ENCODE measurements at regions of chr11 and their contacts with region 1.

Region 1: GRCh38 chr11:12900496-12900895 is 108.6 kb upstream of the RASSF10 start:
- DNase-seq: no peak
- ATAC-seq: no peak
- H3K4me3 ChIP-seq: no peak overlapping the region
- H3K27ac ChIP-seq: peak overlapping the region; percentile 88 to 93 (median 92)
- H3K4me1 ChIP-seq: peaks cover 42 to 61% of the 10 kb centered on the region in 2 donors
- H3K27me3 ChIP-seq: no peaks in the 10 kb centered on the region
- CTCF ChIP-seq: no peak
- POLR2A ChIP-seq: no peak

Region 2: DNA sequence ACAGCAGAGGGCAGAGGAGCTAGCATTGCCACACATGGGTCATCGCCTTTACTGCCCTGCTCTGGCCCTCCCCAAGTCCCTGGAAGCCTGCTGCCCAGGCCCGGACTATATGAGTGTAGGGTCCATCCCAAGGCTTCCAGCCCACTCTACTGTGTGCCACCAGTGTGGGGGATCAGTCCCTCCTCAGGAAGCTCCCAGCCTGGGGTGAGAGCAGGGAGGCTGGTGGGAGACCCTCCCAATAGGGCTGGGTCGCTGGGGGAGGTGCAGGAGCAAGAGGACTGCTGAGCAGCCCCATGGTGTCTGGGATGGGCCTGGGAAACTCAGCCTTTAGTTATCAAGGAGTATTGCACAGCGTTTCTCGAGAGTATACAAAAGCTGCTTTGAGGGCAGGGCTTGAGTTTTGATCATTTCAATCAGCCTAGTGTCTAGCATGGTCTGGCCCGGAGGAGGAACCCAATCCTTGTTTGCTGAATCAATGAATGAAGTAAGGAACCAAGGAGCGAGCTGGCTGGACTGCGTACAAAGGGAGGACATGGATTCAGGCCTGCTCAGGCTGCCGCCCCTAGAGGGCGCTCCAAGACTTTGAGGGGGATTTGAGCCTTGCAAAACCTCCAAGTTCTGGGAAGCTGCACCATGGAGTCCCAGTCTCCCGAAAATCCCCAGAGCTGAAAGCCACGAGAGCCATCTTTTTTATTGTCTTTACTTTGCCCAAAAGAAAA is 612.1 kb before region 1 on chr11:
- in situ Hi-C with region 1: no loop called
- intact Hi-C with region 1: loop called (anchors 5 kb)
- DNase-seq: peak in 1 of 2 donors; percentile 55
- ATAC-seq: peak; percentile 47 to 48
- H3K4me3 ChIP-seq: no peak overlapping the region
- H3K27ac ChIP-seq: peak overlapping the region in 2 of 4 donors; percentile 53 to 58
- H3K4me1 ChIP-seq: peaks cover 7 to 11% of the 10 kb centered on the region in 2 donors
- H3K27me3 ChIP-seq: no peaks in the 10 kb centered on the region
- CTCF ChIP-seq: peak; percentile 31 to 80 (median 66)
- POLR2A ChIP-seq: no peak

Region 3: DNA sequence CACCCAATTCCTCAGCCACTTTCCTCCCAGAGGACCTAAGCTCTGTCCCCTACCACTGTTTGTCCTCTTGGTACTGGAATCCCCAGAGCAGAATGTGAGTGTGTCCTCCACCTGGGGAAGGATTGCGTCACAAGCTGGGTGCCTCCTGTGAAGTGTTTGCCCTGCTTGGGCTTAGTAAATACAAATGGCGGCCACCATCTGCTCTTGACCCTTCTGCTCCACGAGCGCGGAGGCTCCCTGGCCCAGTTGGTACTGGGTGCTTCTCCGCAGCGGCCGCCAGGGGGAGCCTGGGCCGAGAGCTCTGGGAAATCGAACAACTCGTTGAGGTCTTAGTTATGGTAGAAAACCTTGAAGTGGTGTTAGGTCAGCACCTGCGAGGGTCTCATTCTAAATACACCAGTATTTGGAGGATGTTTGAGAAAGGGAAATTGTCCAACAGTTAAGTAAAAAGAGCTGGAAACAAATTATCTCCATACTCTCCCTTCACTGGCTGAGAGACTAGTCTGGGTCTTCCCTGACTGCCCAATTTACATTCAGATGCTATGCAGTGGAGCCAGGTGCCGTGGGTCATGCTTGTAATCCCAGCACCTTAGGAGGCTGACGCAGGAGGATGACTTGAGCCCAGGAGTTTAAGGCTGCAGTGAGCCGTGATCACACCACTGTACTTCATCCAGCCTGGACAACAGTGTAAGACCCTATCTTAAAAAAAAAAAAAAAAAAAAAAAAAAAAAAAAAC is 300.9 kb before region 1 on chr11:
- in situ Hi-C with region 1: loop called in 2 of 4 experiments (anchors 5 to 10 kb)
- intact Hi-C with region 1: loop called (anchors 2 kb)
- DNase-seq: peak in 1 of 2 donors; percentile 36
- ATAC-seq: peak; percentile 65 to 86
- H3K4me3 ChIP-seq: no peak overlapping the region
- H3K27ac ChIP-seq: no peak overlapping the region
- H3K4me1 ChIP-seq: peaks cover 0 to 6% of the 10 kb centered on the region in 2 donors
- H3K27me3 ChIP-seq: no peaks in the 10 kb centered on the region
- CTCF ChIP-seq: peak; percentile 48 to 82 (median 66)
- POLR2A ChIP-seq: no peak

Region 4: GRCh38 chr11:12777208-12777874 is 123.2 kb before region 1 on chr11:
- in situ Hi-C with region 1: no loop called
- intact Hi-C with region 1: loop called (anchors 5 kb)
- DNase-seq: no peak
- ATAC-seq: peak; percentile 93 to 94
- H3K4me3 ChIP-seq: peak overlapping the region in 1 of 4 donors; percentile 17
- H3K27ac ChIP-seq: peak overlapping the region; percentile 80 to 95 (median 90)
- H3K4me1 ChIP-seq: peaks cover 53 to 97% of the 10 kb centered on the region in 2 donors
- H3K27me3 ChIP-seq: no peaks in the 10 kb centered on the region
- CTCF ChIP-seq: no peak
- POLR2A ChIP-seq: peak in 1 of 2 donors; percentile 42

Region 5: DNA sequence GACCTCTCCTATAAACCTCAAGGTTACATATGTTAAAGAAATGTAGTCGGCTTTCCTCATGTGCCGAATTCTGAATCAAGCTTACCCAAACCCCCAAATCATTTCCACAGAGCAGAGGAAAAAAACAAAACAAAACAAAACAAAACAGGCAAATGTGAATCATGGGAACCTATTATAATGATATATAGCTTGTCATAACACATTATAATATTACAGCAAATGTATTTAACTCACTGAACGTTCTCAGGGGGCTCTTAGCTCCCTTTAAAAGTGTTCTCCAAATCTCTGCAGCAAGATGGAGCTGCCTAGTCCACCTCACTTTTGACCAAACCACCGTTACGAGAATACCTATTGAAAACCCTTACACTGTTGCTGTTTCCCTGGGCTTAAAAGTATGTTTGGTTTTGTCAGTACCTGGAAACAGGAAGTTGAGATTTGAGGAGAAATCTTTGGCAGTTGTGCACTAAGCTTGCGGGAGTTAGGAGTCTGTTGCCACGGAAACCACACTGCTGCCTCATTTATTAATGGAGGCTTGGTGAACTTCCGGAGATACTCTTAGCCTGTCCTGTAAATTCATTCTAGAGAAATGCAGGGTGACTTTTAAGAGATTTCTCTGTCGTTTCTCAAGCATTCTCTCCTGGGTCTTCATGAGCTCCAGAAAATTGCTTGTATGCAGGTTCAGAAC is 58.4 kb before region 1 on chr11:
- in situ Hi-C with region 1: no loop called
- intact Hi-C with region 1: no loop called
- DNase-seq: no peak
- ATAC-seq: no peak
- H3K4me3 ChIP-seq: peak overlapping the region in 1 of 4 donors; percentile 1
- H3K27ac ChIP-seq: peak overlapping the region; percentile 77 to 93 (median 85)
- H3K4me1 ChIP-seq: peaks cover 80 to 83% of the 10 kb centered on the region in 2 donors
- H3K27me3 ChIP-seq: no peaks in the 10 kb centered on the region
- CTCF ChIP-seq: no peak
- POLR2A ChIP-seq: no peak

Measured in gastrocnemius medialis (tissue), 4 donors.